Activated CD4-positive, alpha-beta T cell treated with anti-CD3 and anti-CD28 coated beads for 36 hours (primary cell): ENCODE measurements at regions of chr4 and their contacts with region 1.

Region 1: GRCh38 chr4:39446751-39447573 is 11.8 kb downstream of the RPL9 start:
- DNase-seq: peak; percentile 76
- ATAC-seq: peak; percentile 81
- H3K4me3 Mint-ChIP-seq: peak overlapping the region; percentile 21
- H3K27ac Mint-ChIP-seq: no peak overlapping the region
- H3K4me1 Mint-ChIP-seq: peaks cover 25% of the 10 kb centered on the region
- H3K27me3 Mint-ChIP-seq: no peaks in the 10 kb centered on the region

Region 2: DNA sequence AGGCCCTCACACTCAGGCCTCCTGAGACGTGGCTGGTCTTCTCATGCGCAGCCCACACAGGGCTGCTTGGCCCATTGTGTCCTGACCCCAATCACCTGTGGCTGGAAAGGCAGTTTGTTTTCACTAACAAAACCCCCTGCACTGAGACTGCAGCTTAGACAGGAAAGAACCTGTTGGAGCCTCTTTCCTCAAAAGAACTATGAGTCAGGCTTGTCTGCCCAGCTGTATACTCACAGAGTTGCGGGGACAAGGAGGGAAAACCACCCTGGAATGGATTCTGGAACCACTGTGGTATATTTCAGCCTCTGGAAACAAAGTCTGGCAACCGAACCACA is 409.5 kb before region 1 on chr4:
- CTCF ChIA-PET with region 1: no interaction called
- POLR2A ChIA-PET with region 1: no interaction called
- intact Hi-C with region 1: no loop called
- DNase-seq: no peak
- ATAC-seq: no peak
- H3K4me3 Mint-ChIP-seq: no peak overlapping the region
- H3K27ac Mint-ChIP-seq: no peak overlapping the region
- H3K4me1 Mint-ChIP-seq: peaks cover 34% of the 10 kb centered on the region
- H3K27me3 Mint-ChIP-seq: no peaks in the 10 kb centered on the region

Region 3: GRCh38 chr4:39285111-39285795 is 161.7 kb before region 1 on chr4:
- CTCF ChIA-PET with region 1: no interaction called
- POLR2A ChIA-PET with region 1: no interaction called
- intact Hi-C with region 1: loop called in 1 of 2 experiments (anchors 5 kb)
- DNase-seq: no peak
- ATAC-seq: peak; percentile 26
- H3K4me3 Mint-ChIP-seq: no peak overlapping the region
- H3K27ac Mint-ChIP-seq: no peak overlapping the region
- H3K4me1 Mint-ChIP-seq: peaks cover 2% of the 10 kb centered on the region
- H3K27me3 Mint-ChIP-seq: no peaks in the 10 kb centered on the region

Region 4: GRCh38 chr4:39476187-39476895 is 29.4 kb after region 1 on chr4:
- CTCF ChIA-PET with region 1: no interaction called
- POLR2A ChIA-PET with region 1: no interaction called
- intact Hi-C with region 1: no loop called
- DNase-seq: no peak
- ATAC-seq: no peak
- H3K4me3 Mint-ChIP-seq: no peak overlapping the region
- H3K27ac Mint-ChIP-seq: no peak overlapping the region
- H3K4me1 Mint-ChIP-seq: no peaks in the 10 kb centered on the region
- H3K27me3 Mint-ChIP-seq: no peaks in the 10 kb centered on the region